Activated CD4-positive, alpha-beta memory T cell treated with anti-CD3 and anti-CD28 coated beads, Interleukin-2, amount 10 ng/mL, durations not matched to agents 7 days and 5 days (primary cell): ENCODE measurements at regions of chr7 and their contacts with region 1.

Region 1: GRCh38 chr7:44885394-44886317 is at the start of gene PURB:
- DNase-seq: peak; percentile 97
- H3K4me3 Mint-ChIP-seq: peak within 1 kb of the TSS; percentile 95
- H3K27ac Mint-ChIP-seq: peak within 1 kb of the TSS; percentile 99
- H3K4me1 Mint-ChIP-seq: peaks cover 64% of the 10 kb centered on the region
- H3K27me3 Mint-ChIP-seq: no peaks in the 10 kb centered on the region
- total RNA-seq, gene PURB: 27.7 to 29.3 TPM

Region 2: GRCh38 chr7:44581879-44582603 is 303.6 kb before region 1 on chr7 and contains the start of gene TMED4:
- CTCF ChIA-PET with region 1: no interaction called
- POLR2A ChIA-PET with region 1: interaction called, 31 read pairs
- DNase-seq: peak; percentile 100
- H3K4me3 Mint-ChIP-seq: peak within 1 kb of the TSS; percentile 92
- H3K27ac Mint-ChIP-seq: peak within 1 kb of the TSS; percentile 85
- H3K4me1 Mint-ChIP-seq: peaks cover 42% of the 10 kb centered on the region
- H3K27me3 Mint-ChIP-seq: no peaks in the 10 kb centered on the region
- total RNA-seq, gene TMED4: 76.0 to 81.8 TPM

Region 3: DNA sequence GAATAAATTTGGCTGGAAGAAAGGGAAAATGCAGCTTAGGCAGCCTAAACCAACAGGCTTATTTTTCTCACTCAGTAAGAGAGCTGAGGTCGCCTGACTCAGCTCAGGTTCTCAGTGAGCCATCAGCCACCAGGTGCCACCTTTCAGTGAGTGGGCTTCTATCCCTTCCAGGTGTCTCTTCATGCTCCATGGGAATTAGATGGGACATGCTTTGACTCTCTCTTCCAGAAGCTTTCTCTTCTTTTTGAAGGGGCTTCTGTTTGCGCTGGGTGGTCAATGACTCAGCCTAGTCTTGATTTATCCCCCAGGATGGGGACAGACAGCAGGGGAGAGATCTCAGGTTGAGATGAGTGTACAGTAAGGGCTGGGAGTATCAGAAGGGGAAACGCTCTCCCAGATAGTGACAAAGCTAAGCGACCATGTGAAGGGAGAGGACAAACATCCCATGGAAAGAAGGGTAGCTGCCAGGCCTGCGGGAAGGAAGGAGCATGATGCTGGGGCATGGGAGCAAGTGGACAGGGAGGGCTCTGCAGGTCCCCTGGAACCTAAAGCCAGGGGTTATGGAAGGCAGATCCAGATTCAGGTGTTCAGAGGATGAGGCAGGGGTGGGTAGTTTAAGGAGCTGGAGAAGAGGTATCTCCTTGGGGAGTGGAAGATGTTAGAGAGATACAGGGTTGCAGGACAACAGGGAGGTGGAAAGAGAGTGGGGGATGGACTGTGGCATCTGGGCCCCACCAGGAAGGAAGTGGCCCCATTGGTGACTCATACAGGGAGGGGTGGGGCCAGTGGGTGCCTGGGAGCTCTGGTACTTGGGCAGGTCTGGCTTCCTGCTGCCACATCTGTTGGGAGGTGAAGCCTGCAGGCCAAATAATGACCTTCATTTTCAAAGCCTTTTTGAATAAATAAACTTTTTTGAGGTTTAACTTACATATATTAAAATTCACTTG is 246.8 kb before region 1 on chr7:
- CTCF ChIA-PET with region 1: no interaction called
- POLR2A ChIA-PET with region 1: interaction called, 25 read pairs
- DNase-seq: peak; percentile 93
- H3K4me3 Mint-ChIP-seq: peak overlapping the region; percentile 73
- H3K27ac Mint-ChIP-seq: peak overlapping the region; percentile 100
- H3K4me1 Mint-ChIP-seq: peaks cover 83% of the 10 kb centered on the region
- H3K27me3 Mint-ChIP-seq: no peaks in the 10 kb centered on the region

Region 4: DNA sequence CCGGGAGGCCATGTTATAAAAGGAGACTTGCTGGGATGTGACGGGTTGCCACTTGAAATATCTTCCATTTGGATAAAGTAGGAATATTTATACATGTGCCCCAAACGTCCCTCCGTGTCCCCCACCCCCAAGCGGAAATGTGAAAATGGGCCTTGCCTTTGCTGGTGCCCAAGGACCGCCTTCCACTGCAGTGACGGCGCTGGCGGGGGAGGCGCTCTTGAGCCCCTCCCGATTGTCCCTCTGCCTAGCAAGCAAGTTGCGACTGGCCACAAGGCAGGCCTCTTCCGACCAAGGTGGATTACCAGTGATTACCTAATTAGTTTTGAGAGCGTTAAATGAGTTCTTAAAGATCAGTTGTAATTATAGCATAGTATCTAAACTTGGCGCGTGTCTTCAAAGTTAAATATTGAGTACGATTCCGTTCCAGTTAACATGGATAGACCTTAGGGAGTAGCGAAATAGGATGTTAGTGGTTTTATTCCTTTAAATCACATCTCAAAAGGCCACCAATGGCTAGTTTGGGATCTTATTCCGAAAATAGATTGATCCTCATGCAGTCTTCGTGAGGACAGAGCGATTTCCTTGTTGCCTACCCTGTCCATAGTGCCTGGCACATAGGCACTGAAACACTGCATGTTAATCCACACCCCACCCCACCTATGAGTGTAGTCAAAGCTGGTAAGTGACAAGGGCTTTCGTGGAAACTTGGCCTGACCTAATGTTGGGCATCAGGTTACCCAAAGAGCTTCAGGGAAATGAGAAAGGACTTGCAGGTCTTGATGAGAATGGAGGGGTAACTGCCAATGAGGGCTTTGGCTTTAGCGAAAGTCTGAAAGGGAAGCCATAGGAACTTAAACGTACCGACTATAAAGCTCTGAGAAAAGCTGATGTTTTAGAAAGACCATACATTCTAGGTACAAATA is 88.1 kb before region 1 on chr7:
- CTCF ChIA-PET with region 1: interaction called, 5 read pairs
- POLR2A ChIA-PET with region 1: interaction called, 32 read pairs
- DNase-seq: peak; percentile 89
- H3K4me3 Mint-ChIP-seq: peak overlapping the region; percentile 81
- H3K27ac Mint-ChIP-seq: peak overlapping the region; percentile 93
- H3K4me1 Mint-ChIP-seq: peaks cover 44% of the 10 kb centered on the region
- H3K27me3 Mint-ChIP-seq: no peaks in the 10 kb centered on the region

Region 5: GRCh38 chr7:44914992-44915607 is 29.4 kb after region 1 on chr7:
- CTCF ChIA-PET with region 1: interaction called, 12 read pairs
- POLR2A ChIA-PET with region 1: interaction called, 20 read pairs
- DNase-seq: peak; percentile 69
- H3K4me3 Mint-ChIP-seq: no peak overlapping the region
- H3K27ac Mint-ChIP-seq: peak overlapping the region; percentile 23
- H3K4me1 Mint-ChIP-seq: peaks cover 11% of the 10 kb centered on the region
- H3K27me3 Mint-ChIP-seq: peaks cover 4% of the 10 kb centered on the region

Region 6: DNA sequence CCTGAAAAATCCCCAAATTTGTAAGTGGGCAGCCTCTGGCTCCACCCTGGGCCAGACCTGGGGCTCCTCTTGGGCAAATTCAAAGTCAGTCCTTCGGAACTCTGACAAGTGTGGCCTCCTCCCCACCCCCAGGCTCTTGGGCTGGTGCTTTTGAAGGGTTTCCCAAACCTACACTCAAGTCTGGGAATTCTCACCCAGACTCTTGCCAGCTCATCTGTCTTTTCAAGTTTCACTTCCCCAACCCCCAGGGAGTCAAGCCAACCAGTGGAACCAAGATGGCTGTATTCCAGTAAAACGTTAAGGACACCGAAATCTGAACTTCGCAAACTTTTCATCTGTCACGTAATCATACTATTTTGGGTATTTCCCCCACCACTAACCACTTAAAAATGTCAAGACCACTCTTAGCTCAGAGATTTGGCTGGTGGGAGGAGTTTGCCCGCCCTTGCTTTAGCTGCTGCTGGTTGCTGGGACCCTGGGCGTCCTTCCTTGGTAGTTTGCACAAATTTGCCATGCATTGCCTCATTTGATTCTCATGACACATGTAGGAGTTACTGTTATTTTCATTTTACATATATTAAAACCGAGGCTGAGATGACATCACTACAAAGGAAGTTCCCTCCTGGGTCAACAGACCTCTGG is 94.9 kb after region 1 on chr7:
- CTCF ChIA-PET with region 1: no interaction called
- POLR2A ChIA-PET with region 1: interaction called, 39 read pairs
- DNase-seq: peak; percentile 75
- H3K4me3 Mint-ChIP-seq: peak overlapping the region; percentile 99
- H3K27ac Mint-ChIP-seq: peak overlapping the region; percentile 96
- H3K4me1 Mint-ChIP-seq: peaks cover 76% of the 10 kb centered on the region
- H3K27me3 Mint-ChIP-seq: no peaks in the 10 kb centered on the region

Region 7: GRCh38 chr7:45129181-45129800 is 243.6 kb after region 1 on chr7:
- CTCF ChIA-PET with region 1: no interaction called
- POLR2A ChIA-PET with region 1: no interaction called
- DNase-seq: no peak
- H3K4me3 Mint-ChIP-seq: no peak overlapping the region
- H3K27ac Mint-ChIP-seq: no peak overlapping the region
- H3K4me1 Mint-ChIP-seq: peaks cover 4% of the 10 kb centered on the region
- H3K27me3 Mint-ChIP-seq: no peaks in the 10 kb centered on the region